Right cardiac atrium (tissue), 5 donors: ENCODE measurements at regions of chr19 and their contacts with region 1.

Region 1: GRCh38 chr19:2391118-2391725 is 31.2 kb downstream of the TMPRSS9 start:
- DNase-seq: no peak
- ATAC-seq: peak; percentile 68
- H3K4me3 ChIP-seq: no peak overlapping the region
- H3K27ac ChIP-seq: no peak overlapping the region
- H3K4me1 ChIP-seq: no peaks in the 10 kb centered on the region
- H3K27me3 ChIP-seq: no peaks in the 10 kb centered on the region

Region 2: GRCh38 chr19:2282062-2282861 is 109.0 kb before region 1 on chr19 and contains the start of gene PEAK3:
- intact Hi-C with region 1: loop called in 1 of 4 experiments (anchors 10 kb)
- DNase-seq: peak; percentile 81 to 94 (median 91)
- ATAC-seq: peak; percentile 92 to 93
- H3K4me3 ChIP-seq: peak within 1 kb of the TSS; percentile 51
- H3K27ac ChIP-seq: no peak within 1 kb of the TSS
- H3K4me1 ChIP-seq: peaks cover 3% of the 10 kb centered on the region
- H3K27me3 ChIP-seq: no peaks in the 10 kb centered on the region
- total RNA-seq, gene PEAK3: 1.0 to 3.1 (median 1.7) TPM

Region 3: DNA sequence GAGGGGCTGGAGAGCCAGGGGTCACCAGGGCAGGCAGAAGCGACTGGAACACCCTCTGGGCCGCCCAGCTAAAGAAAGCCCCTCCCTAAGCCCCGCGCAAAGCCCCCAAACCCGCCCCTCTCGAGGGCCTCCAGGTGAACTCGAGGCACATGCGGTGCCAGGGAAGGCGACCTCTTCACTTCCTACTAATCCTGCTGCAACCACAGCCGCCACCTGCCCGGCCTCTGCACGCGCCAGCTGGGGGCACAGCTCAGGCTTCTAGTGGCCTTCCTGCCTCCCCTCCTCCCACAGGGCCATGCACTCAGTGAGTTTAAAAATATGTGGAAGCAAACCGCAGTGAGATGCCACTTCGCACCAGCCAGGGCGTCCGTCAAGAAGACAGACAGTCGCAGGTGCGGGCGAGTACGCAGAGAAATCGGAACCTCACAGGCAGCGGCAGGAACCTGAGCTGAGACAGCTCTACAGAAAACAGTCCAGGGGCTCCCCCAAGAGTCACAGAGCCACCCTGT is 55.1 kb after region 1 on chr19:
- intact Hi-C with region 1: no loop called
- DNase-seq: peak in 1 of 3 donors; percentile 47
- ATAC-seq: no peak
- H3K4me3 ChIP-seq: no peak overlapping the region
- H3K27ac ChIP-seq: no peak overlapping the region
- H3K4me1 ChIP-seq: no peaks in the 10 kb centered on the region
- H3K27me3 ChIP-seq: no peaks in the 10 kb centered on the region